ENCODE measurements at regions of chr2 and their contacts with region 1.

Region 1: DNA sequence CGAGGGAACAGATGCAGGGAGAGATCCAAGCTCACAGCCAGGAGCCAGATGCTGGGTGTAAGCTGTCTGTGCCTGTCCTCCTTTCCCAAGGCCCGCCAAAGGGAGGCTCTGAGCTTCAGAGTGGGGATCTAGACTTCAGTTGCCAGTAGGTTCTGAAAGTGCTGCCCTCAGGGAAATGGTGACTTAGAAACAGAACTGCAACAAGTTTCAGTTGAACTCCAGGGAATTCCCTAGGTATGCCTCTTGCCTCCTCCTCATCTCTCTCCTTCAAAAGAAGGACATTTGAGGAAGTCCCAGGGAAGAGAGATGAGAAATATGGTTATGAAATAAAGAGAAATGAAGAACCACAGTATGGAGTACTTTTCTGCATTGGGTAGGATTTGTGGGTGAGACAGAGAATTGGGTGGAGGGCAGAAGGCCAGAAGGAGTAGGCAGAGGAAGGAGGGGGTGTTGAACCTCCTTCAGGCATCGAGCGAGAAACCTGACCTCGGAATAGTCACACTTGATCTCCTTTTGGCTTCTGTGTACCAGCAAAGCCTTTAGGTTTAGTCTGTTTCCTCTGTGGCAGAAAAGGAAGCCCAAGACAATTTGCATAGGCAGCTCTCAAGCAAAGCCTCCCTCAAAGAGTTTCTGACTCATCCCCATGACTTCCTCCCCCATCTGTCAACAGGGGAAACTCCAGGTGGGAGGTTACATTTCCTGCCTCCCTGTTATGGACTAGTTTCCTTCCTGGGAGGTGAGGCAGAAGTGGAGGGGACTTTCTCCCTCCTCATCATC is 45.7 kb downstream of the QPCT start:
- DNase-seq: peak; percentile 94
- ATAC-seq: peak; percentile 96
- H3K4me3 ChIP-seq: peak overlapping the region; percentile 19; the same call in 1 of the 2 replicates
- H3K27ac ChIP-seq: peak overlapping the region; percentile 63
- H3K4me1 ChIP-seq: peaks cover 30% of the 10 kb centered on the region
- H3K27me3 ChIP-seq: no peaks in the 10 kb centered on the region
- CTCF ChIP-seq: no peak
- EP300 ChIP-seq: peak; percentile 58 to 90; a peak in 3 of 4 replicates
- POLR2A ChIP-seq: no peak
- RAD21 ChIP-seq: peak; percentile 9; the same call in 1 of the 2 replicates

Region 2: DNA sequence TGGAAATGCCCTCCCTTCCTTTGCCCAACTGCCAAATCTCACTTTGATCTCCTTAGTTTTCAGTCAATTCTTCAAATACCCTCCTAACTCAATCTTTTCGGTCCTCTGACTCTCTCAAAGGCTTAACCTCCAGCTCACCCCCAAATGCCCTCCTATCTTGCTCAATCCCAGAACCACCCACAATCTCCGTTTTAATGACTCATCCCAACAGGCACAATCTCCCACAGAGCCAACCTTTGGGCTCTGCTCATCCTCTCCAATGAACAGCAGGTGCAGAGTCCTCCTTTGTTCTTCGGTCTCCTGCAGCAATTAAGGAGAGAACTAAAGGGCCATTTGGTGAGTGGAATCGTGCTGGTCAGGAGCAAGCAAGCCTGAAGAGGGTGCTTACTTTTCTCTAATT is 1400.7 kb before region 1 on chr2:
- CTCF ChIA-PET with region 1: no interaction called
- POLR2A ChIA-PET with region 1: no interaction called
- RAD21 ChIA-PET with region 1: no interaction called
- SMC1A ChIA-PET with region 1: no interaction called
- in situ Hi-C with region 1: no loop called
- intact Hi-C with region 1: no loop called
- DNase-seq: no peak
- ATAC-seq: no peak
- H3K4me3 ChIP-seq: no peak overlapping the region
- H3K27ac ChIP-seq: no peak overlapping the region
- H3K4me1 ChIP-seq: no peaks in the 10 kb centered on the region
- H3K27me3 ChIP-seq: no peaks in the 10 kb centered on the region
- CTCF ChIP-seq: no peak
- EP300 ChIP-seq: no peak
- POLR2A ChIP-seq: no peak
- RAD21 ChIP-seq: no peak

Region 3: GRCh38 chr2:37287966-37288365 is 102.2 kb before region 1 on chr2:
- CTCF ChIA-PET with region 1: interaction called, 8 read pairs
- POLR2A ChIA-PET with region 1: no interaction called
- RAD21 ChIA-PET with region 1: no interaction called
- SMC1A ChIA-PET with region 1: interaction called, 3 read pairs
- in situ Hi-C with region 1: no loop called
- intact Hi-C with region 1: loop called (anchors 5 kb)
- DNase-seq: peak; percentile 7
- ATAC-seq: peak; percentile 78
- H3K4me3 ChIP-seq: no peak overlapping the region
- H3K27ac ChIP-seq: no peak overlapping the region
- H3K4me1 ChIP-seq: no peaks in the 10 kb centered on the region
- H3K27me3 ChIP-seq: no peaks in the 10 kb centered on the region; a peak in 1 of 4 replicates
- CTCF ChIP-seq: peak; percentile 28 to 56 (median 30); a peak in 4 of 6 replicates
- EP300 ChIP-seq: no peak
- POLR2A ChIP-seq: no peak
- RAD21 ChIP-seq: peak; percentile 70

Region 4: GRCh38 chr2:37402636-37403035 is 12.5 kb after region 1 on chr2:
- CTCF ChIA-PET with region 1: interaction called, 47 read pairs
- POLR2A ChIA-PET with region 1: no interaction called
- RAD21 ChIA-PET with region 1: no interaction called
- SMC1A ChIA-PET with region 1: interaction called, 4 read pairs
- in situ Hi-C with region 1: no loop called
- intact Hi-C with region 1: no loop called
- DNase-seq: no peak
- ATAC-seq: no peak
- H3K4me3 ChIP-seq: no peak overlapping the region
- H3K27ac ChIP-seq: no peak overlapping the region
- H3K4me1 ChIP-seq: no peaks in the 10 kb centered on the region
- H3K27me3 ChIP-seq: no peaks in the 10 kb centered on the region
- CTCF ChIP-seq: no peak
- EP300 ChIP-seq: no peak
- POLR2A ChIP-seq: no peak
- RAD21 ChIP-seq: no peak

Region 5: GRCh38 chr2:37832590-37833197 is 442.5 kb after region 1 on chr2:
- CTCF ChIA-PET with region 1: interaction called, 104 read pairs
- POLR2A ChIA-PET with region 1: no interaction called
- RAD21 ChIA-PET with region 1: interaction called, 78 read pairs
- SMC1A ChIA-PET with region 1: interaction called, 163 read pairs
- in situ Hi-C with region 1: no loop called
- intact Hi-C with region 1: no loop called
- DNase-seq: peak; percentile 68
- ATAC-seq: peak; percentile 92
- H3K4me3 ChIP-seq: no peak overlapping the region
- H3K27ac ChIP-seq: peak overlapping the region; percentile 50
- H3K4me1 ChIP-seq: peaks cover 4% of the 10 kb centered on the region
- H3K27me3 ChIP-seq: no peaks in the 10 kb centered on the region
- CTCF ChIP-seq: peak; percentile 74 to 88 (median 84)
- EP300 ChIP-seq: no peak
- POLR2A ChIP-seq: no peak
- RAD21 ChIP-seq: peak; percentile 100

Region 6: GRCh38 chr2:37871456-37872191 is 481.4 kb after region 1 on chr2:
- CTCF ChIA-PET with region 1: interaction called, 267 read pairs
- POLR2A ChIA-PET with region 1: no interaction called
- RAD21 ChIA-PET with region 1: interaction called, 156 read pairs
- SMC1A ChIA-PET with region 1: interaction called, 211 read pairs
- in situ Hi-C with region 1: loop called (anchors 5 kb)
- intact Hi-C with region 1: no loop called
- DNase-seq: no peak
- ATAC-seq: peak; percentile 77
- H3K4me3 ChIP-seq: no peak overlapping the region
- H3K27ac ChIP-seq: no peak overlapping the region
- H3K4me1 ChIP-seq: peaks cover 16% of the 10 kb centered on the region
- H3K27me3 ChIP-seq: peaks cover 0 to 2% of the 10 kb centered on the region in 2 experiments; a peak in 1 of 4 replicates
- CTCF ChIP-seq: no peak
- EP300 ChIP-seq: peak in 1 of 2 experiments; percentile 18; a peak in 2 of 4 replicates
- POLR2A ChIP-seq: no peak
- RAD21 ChIP-seq: no peak

Region 7: DNA sequence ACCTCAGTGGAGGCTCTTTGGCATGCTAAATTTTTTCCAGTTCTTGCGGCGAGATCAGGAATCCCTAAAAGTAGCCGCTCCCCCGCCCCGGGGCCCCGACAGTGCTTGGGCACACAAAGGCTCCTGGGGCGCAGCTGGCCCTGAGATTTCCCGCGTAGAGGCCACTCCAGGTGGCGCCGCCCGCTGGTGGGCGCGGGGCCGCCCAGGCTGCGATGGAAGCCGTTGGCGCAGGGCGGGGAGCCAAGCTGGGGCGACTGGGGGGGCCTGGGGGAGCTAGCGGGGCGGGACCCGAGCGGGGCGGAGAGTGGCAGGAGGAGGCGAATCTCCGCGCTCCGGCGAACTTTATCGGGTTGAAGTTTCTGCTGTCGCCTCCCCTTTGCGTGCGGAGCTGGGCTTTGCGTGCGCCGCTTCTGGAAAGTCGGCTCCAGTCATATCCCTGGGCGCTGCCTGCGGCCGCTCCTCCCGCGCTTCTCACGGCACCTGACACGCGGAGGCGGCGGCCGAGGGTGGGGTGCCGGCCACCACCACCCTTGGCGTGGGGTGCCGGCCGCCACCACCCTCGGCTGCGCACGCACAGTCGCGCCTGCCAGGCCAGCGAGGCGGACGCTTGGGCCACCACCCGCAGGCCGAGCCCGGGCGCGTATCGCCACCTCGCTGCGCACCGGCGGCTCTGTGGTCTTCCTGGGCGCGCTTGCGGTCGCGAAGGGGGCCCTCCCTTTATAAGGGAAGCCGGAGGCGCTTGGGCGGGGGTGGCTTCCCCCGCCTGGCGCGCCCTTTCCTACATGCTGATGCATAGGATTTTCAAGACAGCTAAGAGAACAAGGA is 686.6 kb after region 1 on chr2:
- CTCF ChIA-PET with region 1: interaction called, 3 read pairs
- POLR2A ChIA-PET with region 1: no interaction called
- RAD21 ChIA-PET with region 1: no interaction called
- SMC1A ChIA-PET with region 1: no interaction called
- in situ Hi-C with region 1: no loop called
- intact Hi-C with region 1: loop called (anchors 10 kb)
- DNase-seq: no peak
- ATAC-seq: peak; percentile 79
- H3K4me3 ChIP-seq: peak overlapping the region; percentile 71
- H3K27ac ChIP-seq: peak overlapping the region; percentile 77
- H3K4me1 ChIP-seq: peaks cover 11% of the 10 kb centered on the region
- H3K27me3 ChIP-seq: no peaks in the 10 kb centered on the region; a peak in 2 of 4 replicates
- CTCF ChIP-seq: peak; percentile 12 to 37 (median 34); a peak in 4 of 6 replicates
- EP300 ChIP-seq: peak; percentile 94 to 97
- POLR2A ChIP-seq: peak; percentile 63
- RAD21 ChIP-seq: peak; percentile 46; the same call in 1 of the 2 replicates

Region 8: GRCh38 chr2:38264396-38265281 is 874.5 kb after region 1 on chr2:
- CTCF ChIA-PET with region 1: no interaction called
- POLR2A ChIA-PET with region 1: no interaction called
- RAD21 ChIA-PET with region 1: no interaction called
- SMC1A ChIA-PET with region 1: no interaction called
- in situ Hi-C with region 1: loop called (anchors 5 kb)
- intact Hi-C with region 1: no loop called
- DNase-seq: no peak
- ATAC-seq: no peak
- H3K4me3 ChIP-seq: no peak overlapping the region
- H3K27ac ChIP-seq: peak overlapping the region; percentile 78
- H3K4me1 ChIP-seq: peaks cover 32% of the 10 kb centered on the region
- H3K27me3 ChIP-seq: no peaks in the 10 kb centered on the region
- CTCF ChIP-seq: no peak
- EP300 ChIP-seq: no peak
- POLR2A ChIP-seq: no peak
- RAD21 ChIP-seq: no peak